Calu3 (cell line): ENCODE measurements at regions of chr7 and their contacts with region 1.

Region 1: GRCh38 chr7:19899529-19899928 is 126.1 kb upstream of the TMEM196 start:
- DNase-seq: peak; percentile 47
- H3K4me3 Mint-ChIP-seq: peak overlapping the region; percentile 31
- H3K27ac Mint-ChIP-seq: no peak overlapping the region
- H3K4me1 Mint-ChIP-seq: peaks cover 10% of the 10 kb centered on the region
- H3K27me3 Mint-ChIP-seq: no peaks in the 10 kb centered on the region
- CTCF ChIP-seq: no peak

Region 2: DNA sequence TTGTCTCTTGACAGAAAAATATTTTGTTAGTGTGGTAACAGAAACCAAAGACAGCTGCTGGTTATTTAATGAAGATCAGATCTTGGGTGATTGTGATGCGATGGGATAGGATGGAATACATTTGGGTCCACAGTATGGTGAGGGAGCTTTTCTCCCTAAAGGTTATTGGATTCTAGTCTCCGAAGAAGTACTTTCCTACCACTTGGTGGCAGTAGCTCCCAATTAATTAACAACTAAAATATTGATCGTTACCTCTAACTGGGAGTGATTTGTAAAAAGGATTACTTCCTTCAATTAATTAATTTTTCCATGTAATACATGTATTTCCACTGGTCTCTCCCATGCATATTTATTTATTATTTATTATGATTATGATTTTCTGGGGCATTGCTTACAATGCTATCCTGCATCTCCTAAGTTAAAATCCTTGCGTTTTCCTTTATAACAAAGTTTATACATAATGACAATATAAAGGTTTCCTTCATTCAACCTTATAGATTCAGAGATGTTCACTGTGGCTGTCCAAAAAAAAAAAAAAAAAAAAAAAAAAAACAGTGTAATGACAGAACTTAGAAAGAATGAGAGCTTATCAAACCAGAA is 151.7 kb before region 1 on chr7:
- CTCF ChIA-PET with region 1: no interaction called
- intact Hi-C with region 1: no loop called
- DNase-seq: peak; percentile 39
- H3K4me3 Mint-ChIP-seq: no peak overlapping the region
- H3K27ac Mint-ChIP-seq: no peak overlapping the region
- H3K4me1 Mint-ChIP-seq: peaks cover 26% of the 10 kb centered on the region
- H3K27me3 Mint-ChIP-seq: no peaks in the 10 kb centered on the region
- CTCF ChIP-seq: peak; percentile 86

Region 3: GRCh38 chr7:19834566-19834965 is 65.0 kb before region 1 on chr7:
- CTCF ChIA-PET with region 1: no interaction called
- intact Hi-C with region 1: loop called (anchors 2 kb)
- DNase-seq: peak; percentile 59
- H3K4me3 Mint-ChIP-seq: no peak overlapping the region
- H3K27ac Mint-ChIP-seq: peak overlapping the region; percentile 0
- H3K4me1 Mint-ChIP-seq: peaks cover 26% of the 10 kb centered on the region
- H3K27me3 Mint-ChIP-seq: no peaks in the 10 kb centered on the region
- CTCF ChIP-seq: no peak

Region 4: DNA sequence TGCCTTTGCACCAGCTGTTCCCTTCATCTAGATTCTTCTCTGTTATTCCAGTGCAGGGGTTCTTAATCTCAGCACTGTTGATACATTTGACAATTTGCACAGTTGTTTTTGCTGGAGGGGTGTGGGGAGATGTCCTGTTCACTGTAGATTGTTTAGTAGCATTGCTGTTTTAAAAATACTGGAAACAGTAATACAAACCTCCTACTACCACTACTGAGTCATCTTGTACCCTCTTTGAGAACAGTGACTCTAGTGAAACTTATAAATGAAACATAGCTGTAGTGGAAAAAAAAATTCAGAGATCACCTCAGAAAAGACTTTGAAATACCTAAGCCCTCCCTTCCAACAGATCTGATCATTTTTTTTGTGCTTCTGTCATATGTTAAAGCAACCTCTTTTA is 28.7 kb after region 1 on chr7:
- CTCF ChIA-PET with region 1: no interaction called
- intact Hi-C with region 1: no loop called
- DNase-seq: no peak
- H3K4me3 Mint-ChIP-seq: no peak overlapping the region
- H3K27ac Mint-ChIP-seq: no peak overlapping the region
- H3K4me1 Mint-ChIP-seq: peaks cover 28% of the 10 kb centered on the region
- H3K27me3 Mint-ChIP-seq: no peaks in the 10 kb centered on the region
- CTCF ChIP-seq: no peak

Region 5: GRCh38 chr7:19958309-19958896 is 58.9 kb after region 1 on chr7:
- CTCF ChIA-PET with region 1: no interaction called
- intact Hi-C with region 1: loop called (anchors 1 kb)
- DNase-seq: peak; percentile 80
- H3K4me3 Mint-ChIP-seq: no peak overlapping the region
- H3K27ac Mint-ChIP-seq: peak overlapping the region; percentile 97
- H3K4me1 Mint-ChIP-seq: peaks cover 33% of the 10 kb centered on the region
- H3K27me3 Mint-ChIP-seq: no peaks in the 10 kb centered on the region
- CTCF ChIP-seq: no peak